Activated naive CD4-positive, alpha-beta T cell treated with anti-CD3 and anti-CD28 coated beads, Interleukin-2, amount 10 ng/mL, durations not matched to agents 7 days and 5 days (primary cell): ENCODE measurements at regions of chr17 and their contacts with region 1.

Region 1: GRCh38 chr17:75864448-75864871 is 9.3 kb upstream of the WBP2 start:
- DNase-seq: peak; percentile 77
- H3K4me3 Mint-ChIP-seq: peak overlapping the region; percentile 6
- H3K27ac Mint-ChIP-seq: peak overlapping the region; percentile 91
- H3K4me1 Mint-ChIP-seq: peaks cover 30% of the 10 kb centered on the region
- H3K27me3 Mint-ChIP-seq: no peaks in the 10 kb centered on the region

Region 2: GRCh38 chr17:75764711-75765421 is 99.6 kb before region 1 on chr17 and contains the start of gene GALK1:
- CTCF ChIA-PET with region 1: interaction called, 11 read pairs
- DNase-seq: peak; percentile 82
- H3K4me3 Mint-ChIP-seq: peak within 1 kb of the TSS; percentile 78
- H3K27ac Mint-ChIP-seq: peak within 1 kb of the TSS; percentile 76
- H3K4me1 Mint-ChIP-seq: peaks cover 17% of the 10 kb centered on the region
- H3K27me3 Mint-ChIP-seq: peaks cover 16% of the 10 kb centered on the region